ENCODE measurements at regions of chr21 and their contacts with region 1.

Region 1: DNA sequence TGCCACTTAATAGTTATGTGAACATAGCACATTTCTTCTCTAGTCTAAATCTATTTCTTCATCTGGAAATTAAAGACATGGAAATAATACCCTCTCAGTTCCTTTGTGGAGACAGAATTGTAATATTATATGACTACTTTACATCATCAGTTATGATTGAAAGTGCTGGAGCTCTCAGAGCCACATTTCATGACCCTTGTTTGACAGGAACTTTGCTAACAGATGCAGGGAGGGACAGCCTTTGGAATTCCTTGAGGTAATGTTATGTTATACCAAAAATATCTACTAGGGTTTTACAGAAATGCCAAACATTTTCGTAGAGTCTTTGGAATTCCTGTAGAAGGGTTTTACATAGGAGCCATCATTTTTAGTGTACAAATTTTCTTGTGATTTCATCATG is 57.4 kb upstream of the ADAMTS5 start:
- DNase-seq: no peak
- H3K4me3 ChIP-seq: no peak overlapping the region
- H3K27ac ChIP-seq: no peak overlapping the region
- H3K4me1 ChIP-seq: no peaks in the 10 kb centered on the region
- H3K27me3 ChIP-seq: no peaks in the 10 kb centered on the region
- CTCF ChIP-seq: no peak
- EP300 ChIP-seq: no peak
- POLR2A ChIP-seq: no peak

Region 2: GRCh38 chr21:27094184-27094948 is 70.1 kb after region 1 on chr21:
- intact Hi-C with region 1: no loop called
- DNase-seq: no peak
- H3K4me3 ChIP-seq: no peak overlapping the region
- H3K27ac ChIP-seq: peak overlapping the region in 1 of 2 donors; percentile 72
- H3K4me1 ChIP-seq: peaks cover 3% of the 10 kb centered on the region
- H3K27me3 ChIP-seq: no peaks in the 10 kb centered on the region
- CTCF ChIP-seq: no peak
- EP300 ChIP-seq: no peak
- POLR2A ChIP-seq: no peak

Region 3: DNA sequence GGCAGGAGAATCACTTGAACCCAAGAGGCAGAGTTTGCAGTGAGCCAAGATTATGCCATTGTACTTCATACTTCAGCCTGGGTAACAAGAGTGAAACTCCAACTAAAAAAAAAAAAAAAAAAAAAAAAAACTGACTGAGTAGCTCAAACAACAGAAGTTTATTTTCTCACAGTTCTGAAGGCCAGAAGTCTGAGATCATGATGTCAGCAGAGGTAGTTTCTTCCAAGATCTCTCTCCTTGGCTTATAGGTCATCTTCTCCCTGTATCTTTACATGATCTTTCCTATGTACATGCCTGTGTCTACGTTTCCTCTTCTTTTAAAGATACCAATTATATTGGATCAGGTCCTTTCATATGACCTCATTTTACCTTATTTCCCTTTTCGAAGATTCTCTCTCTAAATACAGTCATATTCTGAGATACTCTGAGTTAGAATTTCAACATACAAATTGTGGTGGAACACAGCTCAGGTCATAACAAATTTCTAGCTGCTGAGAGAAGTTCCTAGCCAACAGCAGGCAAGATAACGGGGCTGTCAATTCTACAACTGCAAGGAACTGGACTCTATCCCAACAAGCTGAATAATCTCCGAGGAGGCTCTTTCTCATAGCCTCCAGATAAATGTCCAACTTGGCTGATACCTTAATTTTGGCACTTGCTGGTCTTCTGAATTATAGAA is 130.3 kb after region 1 on chr21:
- intact Hi-C with region 1: no loop called
- DNase-seq: peak in 3 of 5 donors; percentile 18 to 57 (median 35)
- H3K4me3 ChIP-seq: no peak overlapping the region
- H3K27ac ChIP-seq: peak overlapping the region in 1 of 2 donors; percentile 59
- H3K4me1 ChIP-seq: peaks cover 5% of the 10 kb centered on the region
- H3K27me3 ChIP-seq: no peaks in the 10 kb centered on the region
- CTCF ChIP-seq: no peak
- EP300 ChIP-seq: no peak
- POLR2A ChIP-seq: no peak

Region 4: GRCh38 chr21:27291006-27291405 is 266.7 kb after region 1 on chr21:
- intact Hi-C with region 1: no loop called
- DNase-seq: no peak
- H3K4me3 ChIP-seq: no peak overlapping the region
- H3K27ac ChIP-seq: no peak overlapping the region
- H3K4me1 ChIP-seq: no peaks in the 10 kb centered on the region
- H3K27me3 ChIP-seq: no peaks in the 10 kb centered on the region
- CTCF ChIP-seq: no peak
- EP300 ChIP-seq: no peak
- POLR2A ChIP-seq: no peak

Region 5: DNA sequence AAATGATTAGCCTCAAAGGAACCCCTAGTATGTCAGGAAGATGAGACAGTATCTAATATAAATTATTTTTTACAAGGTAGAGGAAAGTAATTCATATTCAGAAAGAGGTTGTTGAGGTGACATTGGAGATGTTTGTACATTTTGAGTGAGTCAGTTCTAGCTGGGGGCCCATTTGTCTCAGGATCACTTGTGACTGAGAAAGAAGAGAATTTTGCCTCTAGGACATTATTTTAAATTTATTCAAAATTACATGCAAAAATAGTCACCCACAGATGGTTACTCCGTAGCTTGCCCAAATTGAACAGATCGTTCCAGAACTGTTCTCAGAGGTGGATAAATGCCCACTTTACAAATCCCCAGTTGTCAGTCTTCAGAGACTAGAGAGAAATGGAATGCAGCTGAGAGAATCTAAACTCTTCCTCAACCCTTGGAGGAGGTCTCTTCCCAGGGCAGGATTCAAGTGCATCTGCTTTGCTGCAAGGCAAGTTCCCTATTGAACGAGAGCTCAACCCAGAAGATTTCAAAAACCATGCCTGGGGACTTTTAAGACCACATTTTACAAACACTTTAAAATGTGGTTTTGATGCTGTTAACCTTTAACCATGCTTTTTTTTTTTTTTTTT is 930.4 kb after region 1 on chr21:
- intact Hi-C with region 1: no loop called
- DNase-seq: no peak
- H3K4me3 ChIP-seq: no peak overlapping the region
- H3K27ac ChIP-seq: no peak overlapping the region
- H3K4me1 ChIP-seq: no peaks in the 10 kb centered on the region
- H3K27me3 ChIP-seq: no peaks in the 10 kb centered on the region
- CTCF ChIP-seq: no peak
- EP300 ChIP-seq: no peak
- POLR2A ChIP-seq: no peak

Region 6: GRCh38 chr21:28633839-28634555 is 1609.7 kb after region 1 on chr21:
- intact Hi-C with region 1: loop called in 1 of 4 experiments (anchors 10 kb)
- DNase-seq: peak in 1 of 5 donors; percentile 17
- H3K4me3 ChIP-seq: no peak overlapping the region
- H3K27ac ChIP-seq: no peak overlapping the region
- H3K4me1 ChIP-seq: peaks cover 4% of the 10 kb centered on the region
- H3K27me3 ChIP-seq: no peaks in the 10 kb centered on the region
- CTCF ChIP-seq: no peak
- EP300 ChIP-seq: no peak
- POLR2A ChIP-seq: no peak

Measured in ovary (tissue), 10 donors.